ENCODE measurements at regions of chr22 and their contacts with region 1.

Region 1: GRCh38 chr22:43385770-43386641 is 25.8 kb upstream of the MPPED1 start:
- DNase-seq: peak; percentile 56 to 80
- ATAC-seq: peak; percentile 71 to 93 (median 90)
- H3K4me3 ChIP-seq: no peak overlapping the region
- H3K27ac ChIP-seq: no peak overlapping the region
- H3K4me1 ChIP-seq: peaks cover 0 to 6% (median 0%) of the 10 kb centered on the region in 9 donors
- H3K27me3 ChIP-seq: peaks cover 0 to 68% (median 40%) of the 10 kb centered on the region in 7 donors
- CTCF ChIP-seq: peak; percentile 79 to 96 (median 90)

Region 2: DNA sequence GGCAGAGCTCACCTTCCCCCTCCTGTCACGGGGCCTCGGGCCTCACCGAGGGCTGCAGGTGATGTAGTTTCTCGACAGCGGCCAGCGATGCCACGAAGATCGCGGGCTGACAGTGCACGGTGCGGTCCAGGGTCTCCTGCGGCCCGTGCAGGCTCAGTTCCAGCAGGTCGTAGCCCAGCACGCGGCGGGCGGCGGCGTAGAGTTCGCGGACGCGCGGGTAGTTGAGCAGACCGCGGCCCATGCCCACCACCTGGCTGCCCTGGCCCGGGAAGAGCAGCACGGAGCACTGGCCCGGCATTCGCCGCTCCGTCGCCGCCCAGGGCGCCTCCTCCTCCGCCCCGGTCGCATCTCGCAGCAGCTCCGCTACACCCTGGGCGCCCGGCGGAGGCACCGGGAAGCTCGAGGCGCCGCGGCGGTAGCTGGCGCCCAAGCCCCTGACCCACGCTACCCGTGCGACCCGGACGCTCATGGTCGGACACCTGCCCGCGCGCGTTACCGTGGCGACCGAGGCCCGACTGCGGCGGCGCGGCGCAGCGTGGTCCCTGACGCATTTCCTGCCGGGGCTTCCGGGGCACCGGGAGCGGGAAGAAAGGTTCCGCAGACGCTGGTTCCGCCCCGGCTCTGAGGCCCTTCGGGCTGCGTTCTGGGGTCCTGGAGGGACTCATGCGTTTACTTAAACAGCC is 243.0 kb before region 1 on chr22 and contains the start of gene MCAT:
- intact Hi-C with region 1: no loop called
- DNase-seq: peak; percentile 82 to 86
- ATAC-seq: peak; percentile 92 to 96 (median 94)
- H3K4me3 ChIP-seq: peak within 1 kb of the TSS; percentile 80 to 100 (median 96)
- H3K27ac ChIP-seq: peak within 1 kb of the TSS in 9 of 10 donors; percentile 50 to 91 (median 71)
- H3K4me1 ChIP-seq: peaks cover 7 to 34% (median 19%) of the 10 kb centered on the region in 9 donors
- H3K27me3 ChIP-seq: no peaks in the 10 kb centered on the region
- CTCF ChIP-seq: no peak
- total RNA-seq, gene MCAT: 12.8 to 18.2 (median 15.2) TPM

Region 3: GRCh38 chr22:43230971-43231723 is 154.9 kb before region 1 on chr22:
- intact Hi-C with region 1: loop called in 9 of 10 experiments (anchors 1 to 5 kb)
- DNase-seq: peak; percentile 38 to 60
- ATAC-seq: peak in 6 of 8 donors; percentile 21 to 57 (median 35)
- H3K4me3 ChIP-seq: no peak overlapping the region
- H3K27ac ChIP-seq: no peak overlapping the region
- H3K4me1 ChIP-seq: peaks cover 0 to 7% (median 2%) of the 10 kb centered on the region in 9 donors
- H3K27me3 ChIP-seq: peaks cover 0 to 37% (median 9%) of the 10 kb centered on the region in 7 donors
- CTCF ChIP-seq: peak; percentile 82 to 96 (median 93)

Region 4: GRCh38 chr22:43273902-43274484 is 112.0 kb before region 1 on chr22:
- intact Hi-C with region 1: loop called in 9 of 10 experiments (anchors 1 to 10 kb)
- DNase-seq: peak in 1 of 2 donors; percentile 39
- ATAC-seq: peak; percentile 44 to 78 (median 63)
- H3K4me3 ChIP-seq: no peak overlapping the region
- H3K27ac ChIP-seq: no peak overlapping the region
- H3K4me1 ChIP-seq: no peaks in the 10 kb centered on the region
- H3K27me3 ChIP-seq: peaks cover 0 to 52% (median 4%) of the 10 kb centered on the region in 7 donors
- CTCF ChIP-seq: peak; percentile 34 to 79 (median 72)

Region 5: DNA sequence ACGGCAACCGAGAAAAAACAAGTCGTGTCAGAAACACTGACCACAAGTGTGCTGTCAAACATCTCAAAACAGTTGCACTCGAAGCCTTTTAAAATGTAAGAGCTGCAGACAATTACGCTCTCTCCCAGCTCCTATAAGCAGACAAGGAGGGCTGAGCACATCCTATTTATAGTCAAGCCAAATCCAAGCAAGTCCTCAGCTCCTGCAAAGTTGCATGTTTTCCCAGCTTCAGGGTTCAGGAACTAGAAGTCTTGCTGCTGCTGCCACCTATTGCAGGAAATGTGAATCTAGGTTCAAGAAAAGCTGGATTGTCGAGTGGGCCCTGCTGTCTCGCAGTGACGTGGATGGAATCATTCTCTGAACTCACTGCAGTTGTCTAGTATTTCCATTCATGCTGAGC is 410.6 kb after region 1 on chr22:
- intact Hi-C with region 1: loop called in 8 of 10 experiments (anchors 2 to 10 kb)
- DNase-seq: no peak
- ATAC-seq: peak in 7 of 8 donors; percentile 59 to 77 (median 70)
- H3K4me3 ChIP-seq: no peak overlapping the region
- H3K27ac ChIP-seq: no peak overlapping the region
- H3K4me1 ChIP-seq: peaks cover 0 to 10% (median 2%) of the 10 kb centered on the region in 9 donors
- H3K27me3 ChIP-seq: no peaks in the 10 kb centered on the region
- CTCF ChIP-seq: peak in 7 of 9 donors; percentile 21 to 58 (median 45)

Region 6: GRCh38 chr22:43826142-43827002 is 440.4 kb after region 1 on chr22:
- intact Hi-C with region 1: loop called in 6 of 10 experiments (anchors 2 to 10 kb)
- DNase-seq: no peak
- ATAC-seq: no peak
- H3K4me3 ChIP-seq: no peak overlapping the region
- H3K27ac ChIP-seq: no peak overlapping the region
- H3K4me1 ChIP-seq: peaks cover 11 to 28% (median 17%) of the 10 kb centered on the region in 9 donors
- H3K27me3 ChIP-seq: peaks cover 0 to 41% (median 18%) of the 10 kb centered on the region in 7 donors
- CTCF ChIP-seq: peak in 6 of 9 donors; percentile 8 to 49 (median 34)

Region 7: DNA sequence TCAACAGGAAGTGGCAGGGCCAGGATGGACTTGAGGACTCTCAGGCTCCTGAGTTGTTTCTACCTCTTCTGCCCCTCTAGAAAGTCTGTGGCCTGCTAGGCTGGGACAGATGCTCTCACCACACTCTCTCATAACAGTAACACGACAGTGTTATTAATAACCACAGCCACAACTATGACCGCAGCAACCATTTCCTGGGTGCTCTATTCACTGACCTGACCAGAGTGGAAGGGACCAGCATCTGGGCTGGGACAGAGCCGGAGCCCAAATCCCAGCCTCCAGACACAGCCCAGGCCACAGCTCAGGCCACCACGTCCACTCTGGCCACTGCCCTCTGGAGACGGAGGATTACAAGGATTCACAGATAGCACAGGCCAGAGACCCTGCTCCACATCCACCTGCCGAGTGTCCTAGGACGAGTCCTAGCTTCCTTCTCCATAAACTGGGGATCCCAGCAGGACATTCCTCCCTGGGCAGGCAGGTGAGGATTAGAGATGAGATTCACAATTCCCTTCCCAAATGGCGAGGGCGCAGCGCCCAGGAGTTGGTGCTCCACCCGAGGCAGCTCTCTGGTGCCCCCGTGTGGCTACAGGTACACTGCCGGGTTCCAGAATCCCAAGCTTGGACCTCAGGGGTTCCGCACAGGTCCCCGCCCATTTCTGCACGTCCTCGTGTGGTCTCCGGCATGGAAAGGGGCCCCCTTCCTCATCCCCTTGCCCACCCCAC is 498.8 kb after region 1 on chr22:
- intact Hi-C with region 1: loop called in 2 of 10 experiments (anchors 10 kb)
- DNase-seq: peak; percentile 49 to 71
- ATAC-seq: peak in 6 of 8 donors; percentile 33 to 66 (median 52)
- H3K4me3 ChIP-seq: no peak overlapping the region
- H3K27ac ChIP-seq: no peak overlapping the region
- H3K4me1 ChIP-seq: no peaks in the 10 kb centered on the region
- H3K27me3 ChIP-seq: peaks cover 6 to 64% (median 32%) of the 10 kb centered on the region in 7 donors
- CTCF ChIP-seq: peak; percentile 52 to 85 (median 76)

Region 8: GRCh38 chr22:44625981-44626687 is 1240.1 kb after region 1 on chr22:
- intact Hi-C with region 1: loop called in 7 of 10 experiments (anchors 5 to 10 kb)
- DNase-seq: peak; percentile 63 to 76
- ATAC-seq: peak; percentile 58 to 85 (median 70)
- H3K4me3 ChIP-seq: no peak overlapping the region
- H3K27ac ChIP-seq: no peak overlapping the region
- H3K4me1 ChIP-seq: peaks cover 0 to 5% (median 0%) of the 10 kb centered on the region in 9 donors
- H3K27me3 ChIP-seq: peaks cover 0 to 23% (median 5%) of the 10 kb centered on the region in 7 donors
- CTCF ChIP-seq: peak; percentile 94 to 98 (median 97)

Measured in heart right ventricle (tissue), 16 donors.